GM12878 (cell line): ENCODE measurements at regions of chr7 and their contacts with region 1.

Region 1: DNA sequence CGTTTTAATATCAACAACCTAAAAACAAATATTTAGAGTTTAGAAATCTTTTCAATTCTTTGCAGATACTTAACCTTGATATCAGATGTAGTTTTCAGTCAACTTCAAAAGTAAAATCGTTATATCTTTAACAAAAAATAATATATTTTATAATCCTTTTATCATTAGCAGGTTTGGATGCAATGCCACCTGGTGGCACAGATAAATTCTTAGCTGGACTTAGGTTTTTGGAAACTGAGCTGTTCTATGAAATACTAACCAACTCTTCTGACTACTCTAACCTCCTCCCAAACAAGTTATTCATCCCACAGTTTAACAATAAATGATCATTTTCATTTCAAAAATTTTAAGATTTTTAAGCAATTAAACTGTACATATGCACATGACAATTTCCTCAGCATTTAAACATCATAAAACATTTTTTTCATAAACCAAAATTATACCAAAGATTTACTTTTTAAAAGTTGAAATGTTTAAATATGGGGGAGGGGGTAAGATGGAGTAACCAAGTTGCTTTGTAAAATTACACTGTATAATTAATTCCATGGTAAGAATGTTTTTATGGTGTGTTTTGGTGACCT is 56.9 kb downstream of the HIBADH start:
- DNase-seq: no peak
- ATAC-seq: no peak
- H3K4me3 ChIP-seq: no peak overlapping the region
- H3K27ac ChIP-seq: no peak overlapping the region
- H3K4me1 ChIP-seq: no peaks in the 10 kb centered on the region
- H3K27me3 ChIP-seq: no peaks in the 10 kb centered on the region
- CTCF ChIP-seq: peak in 2 of 3 experiments; percentile 33 to 44; a peak in 4 of 6 replicates
- EP300 ChIP-seq: no peak
- POLR2A ChIP-seq: no peak
- RAD21 ChIP-seq: peak; percentile 30

Region 2: DNA sequence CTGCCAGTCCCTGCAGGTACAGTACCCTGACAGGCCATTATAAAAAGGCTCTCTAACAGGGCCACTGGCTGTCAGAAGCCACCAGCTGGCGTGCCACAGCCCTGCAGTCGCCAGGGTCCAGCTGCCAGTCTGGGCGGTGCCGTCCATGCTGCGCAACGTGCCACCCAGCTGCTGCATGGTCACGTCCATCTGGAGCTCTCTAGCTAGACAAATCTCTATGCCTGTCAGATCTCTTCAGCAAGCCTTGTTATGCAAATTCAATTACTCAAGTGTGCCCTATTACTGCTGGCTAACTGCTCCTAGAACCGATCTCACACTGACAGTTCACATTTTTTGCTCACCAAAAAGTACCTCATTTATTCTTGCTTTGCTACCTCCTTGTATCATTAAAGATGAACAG is 19.0 kb before region 1 on chr7:
- CTCF ChIA-PET with region 1: interaction called, 16 read pairs
- POLR2A ChIA-PET with region 1: no interaction called
- RAD21 ChIA-PET with region 1: interaction called, 5 read pairs
- SMC1A ChIA-PET with region 1: interaction called, 11 read pairs
- in situ Hi-C with region 1: no loop called
- intact Hi-C with region 1: no loop called
- DNase-seq: peak; percentile 53
- ATAC-seq: peak; percentile 97
- H3K4me3 ChIP-seq: no peak overlapping the region
- H3K27ac ChIP-seq: no peak overlapping the region
- H3K4me1 ChIP-seq: no peaks in the 10 kb centered on the region; the same call in 1 of the 2 replicates
- H3K27me3 ChIP-seq: no peaks in the 10 kb centered on the region
- CTCF ChIP-seq: no peak
- EP300 ChIP-seq: no peak
- POLR2A ChIP-seq: no peak
- RAD21 ChIP-seq: no peak

Region 3: DNA sequence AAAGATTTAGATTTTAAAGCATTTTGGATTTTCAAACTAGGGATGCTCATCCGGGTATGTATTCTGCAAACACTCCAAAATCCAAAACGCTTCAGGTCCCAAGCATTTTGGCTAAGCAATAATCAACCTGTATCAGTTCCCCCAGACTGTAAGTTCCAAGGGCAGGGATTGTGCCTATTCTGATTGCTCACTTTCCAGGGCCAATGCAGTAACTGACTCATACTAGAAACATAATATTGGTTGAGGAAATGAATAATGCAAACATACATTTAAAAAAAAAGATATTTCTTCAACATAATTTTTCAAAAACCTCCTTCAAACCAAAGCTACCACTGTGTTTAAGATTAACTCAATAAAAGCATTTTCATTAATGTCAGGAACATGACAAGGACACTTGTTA is 12.6 kb before region 1 on chr7:
- CTCF ChIA-PET with region 1: interaction called, 16 read pairs
- POLR2A ChIA-PET with region 1: no interaction called
- RAD21 ChIA-PET with region 1: no interaction called
- SMC1A ChIA-PET with region 1: interaction called, 7 read pairs
- in situ Hi-C with region 1: no loop called
- intact Hi-C with region 1: no loop called
- DNase-seq: no peak
- ATAC-seq: no peak
- H3K4me3 ChIP-seq: no peak overlapping the region
- H3K27ac ChIP-seq: no peak overlapping the region
- H3K4me1 ChIP-seq: no peaks in the 10 kb centered on the region
- H3K27me3 ChIP-seq: no peaks in the 10 kb centered on the region
- CTCF ChIP-seq: no peak
- EP300 ChIP-seq: no peak
- POLR2A ChIP-seq: no peak
- RAD21 ChIP-seq: no peak